ENCODE measurements at regions of chr1 and their contacts with region 1.

Region 1: GRCh38 chr1:66778266-66778665 is 22.8 kb downstream of the INSL5 start:
- DNase-seq: no peak
- H3K4me3 ChIP-seq: no peak overlapping the region
- H3K27ac ChIP-seq: peak overlapping the region in 1 of 2 experiments; percentile 11; a peak in 2 of 4 replicates
- H3K4me1 ChIP-seq: no peaks in the 10 kb centered on the region; a peak in 2 of 4 replicates
- H3K27me3 ChIP-seq: no peaks in the 10 kb centered on the region
- CTCF ChIP-seq: no peak
- EP300 ChIP-seq: no peak
- RAD21 ChIP-seq: no peak

Region 2: DNA sequence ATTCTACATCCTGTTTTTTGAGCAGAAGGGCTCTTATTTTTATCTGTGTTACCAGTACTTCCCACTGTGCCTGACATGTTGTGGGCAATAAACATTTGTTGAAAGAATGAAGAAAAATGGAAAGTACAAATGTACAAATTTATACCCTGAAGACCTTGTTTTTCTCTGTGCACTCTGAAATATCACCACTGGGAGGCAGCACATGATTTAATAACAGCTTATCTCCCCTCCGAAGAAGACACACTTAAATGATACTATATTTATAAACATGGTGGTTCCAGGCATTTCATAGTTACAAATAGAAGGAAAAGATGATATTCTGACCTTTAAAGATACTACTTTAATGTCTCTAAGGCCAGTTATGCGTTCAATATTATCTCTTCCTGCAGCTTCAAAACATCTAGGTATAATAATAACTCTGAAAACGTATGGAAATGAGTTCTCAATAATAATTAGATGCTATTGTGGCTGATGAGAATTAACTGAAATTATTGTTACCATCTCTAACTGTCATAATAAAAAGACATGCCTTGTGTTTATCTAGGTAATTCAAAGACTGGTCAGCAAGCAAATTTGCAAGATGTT is 13.2 kb before region 1 on chr1:
- CTCF ChIA-PET with region 1: interaction called, 11 read pairs
- POLR2A ChIA-PET with region 1: no interaction called
- DNase-seq: peak; percentile 42
- H3K4me3 ChIP-seq: no peak overlapping the region
- H3K27ac ChIP-seq: no peak overlapping the region
- H3K4me1 ChIP-seq: no peaks in the 10 kb centered on the region; a peak in 1 of 4 replicates
- H3K27me3 ChIP-seq: no peaks in the 10 kb centered on the region
- CTCF ChIP-seq: peak; percentile 90
- EP300 ChIP-seq: no peak
- RAD21 ChIP-seq: peak; percentile 91

Region 3: GRCh38 chr1:66788231-66788939 is 10.1 kb after region 1 on chr1:
- CTCF ChIA-PET with region 1: no interaction called
- POLR2A ChIA-PET with region 1: no interaction called
- DNase-seq: no peak
- H3K4me3 ChIP-seq: no peak overlapping the region
- H3K27ac ChIP-seq: no peak overlapping the region
- H3K4me1 ChIP-seq: no peaks in the 10 kb centered on the region
- H3K27me3 ChIP-seq: no peaks in the 10 kb centered on the region
- CTCF ChIP-seq: no peak
- EP300 ChIP-seq: no peak
- RAD21 ChIP-seq: no peak